ENCODE measurements at regions of chr22 and their contacts with region 1.

Region 1: DNA sequence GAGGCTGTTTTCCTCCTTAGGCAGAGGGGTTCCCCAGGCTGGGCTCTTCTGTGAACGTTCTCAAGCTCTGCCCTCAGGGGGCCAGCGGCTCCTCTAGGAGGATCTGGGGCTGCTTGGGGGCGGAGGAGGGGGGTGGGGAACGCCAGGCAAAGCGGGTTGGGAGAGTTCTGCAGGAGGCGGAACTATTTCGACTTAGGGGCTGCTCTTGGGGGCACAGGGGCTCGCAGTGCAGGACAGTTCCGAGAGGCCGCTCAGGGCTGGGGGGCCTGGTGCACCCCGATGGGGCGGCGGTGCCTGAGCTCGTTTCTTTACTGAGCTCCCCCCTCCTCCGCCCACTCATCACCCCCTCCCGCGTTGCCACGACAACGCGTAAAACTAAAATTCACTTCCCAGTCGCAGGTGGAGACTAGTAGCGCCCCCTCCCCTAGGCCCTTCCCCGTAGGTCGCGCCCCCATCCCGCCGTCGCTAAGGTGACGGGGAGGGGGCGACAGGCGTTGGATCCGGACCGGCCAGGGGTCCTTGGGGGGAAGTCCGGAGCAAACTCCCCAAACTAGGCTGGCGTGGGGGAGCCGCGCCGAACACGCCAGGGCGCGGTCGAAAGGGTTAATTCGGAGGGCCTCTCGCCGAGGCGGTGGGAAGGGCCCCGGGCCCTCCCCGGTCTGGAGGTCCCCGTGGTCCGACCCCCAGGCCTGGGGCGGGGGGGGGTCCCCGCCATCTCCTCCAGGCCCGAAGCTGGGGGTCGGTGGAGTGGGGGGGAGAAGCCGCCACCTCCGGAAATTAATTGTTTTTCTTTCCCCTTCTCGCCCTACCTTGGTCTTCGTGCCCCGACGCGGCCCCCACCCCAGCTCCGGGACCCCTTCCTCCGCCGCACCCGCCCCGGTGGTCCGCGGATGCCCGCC is 857 bp downstream of the SHANK3 start:
- DNase-seq: no peak
- ATAC-seq: no peak
- H3K4me3 Mint-ChIP-seq: peak overlapping the region; percentile 72
- H3K27ac Mint-ChIP-seq: no peak overlapping the region
- H3K4me1 Mint-ChIP-seq: peaks cover 12% of the 10 kb centered on the region
- H3K27me3 Mint-ChIP-seq: peaks cover 41% of the 10 kb centered on the region
- CTCF ChIP-seq: no peak

Region 2: GRCh38 chr22:50060441-50061140 is 612.9 kb before region 1 on chr22:
- CTCF ChIA-PET with region 1: no interaction called
- POLR2A ChIA-PET with region 1: interaction called, 10 read pairs
- intact Hi-C with region 1: no loop called
- DNase-seq: no peak
- ATAC-seq: no peak
- H3K4me3 Mint-ChIP-seq: no peak overlapping the region
- H3K27ac Mint-ChIP-seq: no peak overlapping the region
- H3K4me1 Mint-ChIP-seq: peaks cover 20% of the 10 kb centered on the region
- H3K27me3 Mint-ChIP-seq: peaks cover 35% of the 10 kb centered on the region
- CTCF ChIP-seq: no peak